H1 (cell line): ENCODE measurements at regions of chr9 and their contacts with region 1.

Region 1: GRCh38 chr9:95127249-95128176 is 190.0 kb downstream of the FANCC start:
- DNase-seq: peak in 1 of 2 experiments; percentile 93
- H3K4me3 ChIP-seq: peak overlapping the region; percentile 12 to 58 (median 40); a peak in 7 of 8 replicates
- H3K27ac ChIP-seq: no peak overlapping the region
- H3K4me1 ChIP-seq: peaks cover 5 to 28% (median 14%) of the 10 kb centered on the region in 4 experiments
- H3K27me3 ChIP-seq: no peaks in the 10 kb centered on the region
- CTCF ChIP-seq: peak; percentile 93 to 99 (median 97)
- EP300 ChIP-seq: no peak
- POLR2A ChIP-seq: no peak
- RAD21 ChIP-seq: peak; percentile 76 to 84

Region 2: GRCh38 chr9:94772639-94773303 is 354.7 kb before region 1 on chr9:
- CTCF ChIA-PET with region 1: interaction called, 10 read pairs
- POLR2A ChIA-PET with region 1: no interaction called
- DNase-seq: no peak
- H3K4me3 ChIP-seq: no peak overlapping the region
- H3K27ac ChIP-seq: no peak overlapping the region
- H3K4me1 ChIP-seq: peaks cover 0 to 3% (median 0%) of the 10 kb centered on the region in 4 experiments; a peak in 1 of 7 replicates
- H3K27me3 ChIP-seq: no peaks in the 10 kb centered on the region
- CTCF ChIP-seq: no peak
- EP300 ChIP-seq: no peak
- POLR2A ChIP-seq: no peak
- RAD21 ChIP-seq: no peak

Region 3: DNA sequence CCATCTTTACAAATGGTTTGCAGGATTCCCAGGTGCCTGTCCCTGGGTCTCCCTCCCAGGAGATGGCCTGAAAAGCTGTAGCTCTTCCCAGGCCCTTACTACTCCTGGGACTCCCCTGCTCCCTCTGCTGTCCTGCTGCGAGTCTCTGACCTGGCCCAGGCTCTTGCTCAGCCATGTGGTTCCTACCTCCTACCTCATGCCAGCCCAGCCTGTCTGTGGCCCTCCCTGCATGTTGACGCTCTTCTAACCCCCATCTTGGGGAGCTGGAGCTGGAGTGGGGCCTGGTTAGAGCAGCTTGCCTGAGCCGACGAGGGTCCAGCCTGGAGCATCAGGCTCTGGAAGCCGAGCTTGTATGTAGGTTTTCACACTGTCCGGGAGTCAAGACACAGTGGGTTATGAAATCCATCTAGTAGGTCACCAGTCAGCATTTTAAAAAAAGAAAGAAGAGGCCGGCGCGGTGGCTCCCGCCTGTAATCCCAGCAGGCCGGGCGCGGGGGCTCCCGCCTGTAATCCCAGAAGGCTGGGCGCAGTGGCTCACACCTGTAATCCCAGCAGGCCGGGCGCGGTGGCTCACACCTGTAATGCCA is 54.4 kb before region 1 on chr9:
- CTCF ChIA-PET with region 1: interaction called, 20 read pairs
- POLR2A ChIA-PET with region 1: no interaction called
- DNase-seq: peak in 1 of 2 experiments; percentile 57
- H3K4me3 ChIP-seq: no peak overlapping the region
- H3K27ac ChIP-seq: no peak overlapping the region
- H3K4me1 ChIP-seq: peaks cover 0 to 3% (median 1%) of the 10 kb centered on the region in 4 experiments; a peak in 3 of 7 replicates
- H3K27me3 ChIP-seq: no peaks in the 10 kb centered on the region
- CTCF ChIP-seq: peak; percentile 50 to 63 (median 59)
- EP300 ChIP-seq: no peak
- POLR2A ChIP-seq: no peak
- RAD21 ChIP-seq: peak; percentile 51 to 64

Region 4: DNA sequence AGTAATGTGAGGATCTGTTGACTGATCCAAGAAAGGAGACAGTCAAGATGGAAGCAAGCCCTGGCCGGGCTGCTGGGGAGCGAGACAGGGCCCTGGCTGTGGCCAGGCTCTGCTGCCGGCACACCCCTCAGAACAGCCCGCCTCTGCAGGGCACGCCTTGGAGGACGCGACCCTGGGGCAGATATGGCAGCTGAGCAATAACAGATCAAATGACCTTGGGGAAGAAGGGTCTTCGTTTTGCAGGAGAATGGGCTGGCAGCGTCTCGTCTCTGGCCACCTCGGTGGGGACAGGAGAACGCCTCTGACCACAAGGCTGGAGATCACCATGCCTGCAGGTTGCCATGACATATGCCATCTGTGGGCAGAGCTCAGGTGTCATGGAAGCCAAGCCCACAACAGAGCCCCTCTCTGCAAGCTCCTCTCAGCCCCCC is 16.5 kb before region 1 on chr9:
- CTCF ChIA-PET with region 1: interaction called, 141 read pairs
- POLR2A ChIA-PET with region 1: no interaction called
- DNase-seq: no peak
- H3K4me3 ChIP-seq: no peak overlapping the region
- H3K27ac ChIP-seq: no peak overlapping the region
- H3K4me1 ChIP-seq: no peaks in the 10 kb centered on the region
- H3K27me3 ChIP-seq: no peaks in the 10 kb centered on the region
- CTCF ChIP-seq: no peak
- EP300 ChIP-seq: no peak
- POLR2A ChIP-seq: no peak
- RAD21 ChIP-seq: no peak

Region 5: DNA sequence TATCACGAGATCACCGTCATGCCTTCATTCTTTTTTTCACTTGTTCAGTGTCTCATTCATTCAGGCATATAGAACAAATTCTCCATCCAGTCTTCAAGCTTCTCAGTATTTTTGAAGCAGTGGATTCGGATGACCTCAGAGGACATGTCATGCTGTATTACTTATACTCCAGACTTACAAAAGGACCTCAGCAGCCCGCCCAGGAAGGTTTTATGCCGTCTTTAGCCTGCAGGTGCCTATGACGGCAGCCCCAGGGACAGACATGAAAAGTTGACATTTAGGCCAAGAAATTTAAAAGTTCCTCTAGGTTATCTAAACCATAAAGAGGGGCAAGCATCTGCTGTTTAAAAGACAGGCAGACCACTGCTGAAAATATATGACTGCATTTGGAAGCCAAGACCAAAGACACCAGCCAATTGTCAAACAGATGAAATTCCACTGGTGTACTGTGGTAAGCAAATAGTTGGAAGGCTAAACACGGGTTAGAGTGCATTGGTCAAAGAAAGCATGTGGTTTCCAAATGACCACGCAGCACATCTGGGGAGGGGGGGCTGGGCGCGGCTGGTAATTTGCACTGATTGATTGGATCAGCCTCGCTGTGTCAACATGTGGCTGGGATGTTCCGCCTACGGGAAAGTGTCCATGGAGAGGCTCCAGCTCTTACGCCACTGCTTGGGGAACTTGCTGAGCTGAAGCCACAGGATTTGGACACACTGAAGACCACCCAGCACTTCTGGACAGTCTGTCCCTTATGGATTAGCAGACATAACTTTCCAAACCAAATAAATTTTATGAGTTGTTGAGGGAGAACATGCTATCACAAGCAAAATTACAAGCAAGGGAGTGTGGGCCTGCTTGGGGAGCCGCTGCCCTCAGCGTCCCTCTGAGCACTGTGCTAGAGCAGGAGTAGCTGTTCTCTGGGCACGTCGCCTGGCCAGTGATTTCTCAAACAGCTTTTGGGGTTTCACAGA is 16.4 kb after region 1 on chr9:
- CTCF ChIA-PET with region 1: interaction called, 26 read pairs
- POLR2A ChIA-PET with region 1: interaction called, 4 read pairs
- DNase-seq: no peak
- H3K4me3 ChIP-seq: no peak overlapping the region
- H3K27ac ChIP-seq: no peak overlapping the region
- H3K4me1 ChIP-seq: no peaks in the 10 kb centered on the region
- H3K27me3 ChIP-seq: no peaks in the 10 kb centered on the region
- CTCF ChIP-seq: no peak
- EP300 ChIP-seq: no peak
- POLR2A ChIP-seq: no peak
- RAD21 ChIP-seq: no peak

Region 6: GRCh38 chr9:95249986-95250385 is 122.5 kb after region 1 on chr9:
- CTCF ChIA-PET with region 1: no interaction called
- POLR2A ChIA-PET with region 1: no interaction called
- DNase-seq: no peak
- H3K4me3 ChIP-seq: no peak overlapping the region
- H3K27ac ChIP-seq: no peak overlapping the region
- H3K4me1 ChIP-seq: peaks cover 0 to 4% (median 0%) of the 10 kb centered on the region in 4 experiments; a peak in 1 of 7 replicates
- H3K27me3 ChIP-seq: no peaks in the 10 kb centered on the region
- CTCF ChIP-seq: no peak
- EP300 ChIP-seq: no peak
- POLR2A ChIP-seq: no peak
- RAD21 ChIP-seq: no peak

Region 7: DNA sequence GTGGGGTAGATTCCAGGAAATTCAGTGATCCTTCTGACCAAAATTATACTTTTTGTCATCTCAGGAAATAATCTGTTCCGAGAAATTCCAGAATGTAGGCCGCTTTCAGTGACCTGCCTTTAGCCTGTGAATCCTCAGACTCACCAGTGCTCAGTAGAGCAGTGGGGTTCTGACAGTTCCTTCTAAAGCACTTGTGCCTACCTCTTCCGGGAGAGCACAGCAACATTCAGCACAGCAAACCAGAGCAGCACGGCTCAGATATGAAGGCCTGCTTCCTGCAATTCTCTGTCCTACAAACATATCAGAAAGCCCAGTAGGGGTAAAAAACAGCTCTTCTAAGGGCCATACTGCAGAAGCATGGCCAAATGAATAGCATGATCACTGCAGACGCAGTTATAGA is 175.0 kb after region 1 on chr9:
- CTCF ChIA-PET with region 1: no interaction called
- POLR2A ChIA-PET with region 1: no interaction called
- DNase-seq: no peak
- H3K4me3 ChIP-seq: no peak overlapping the region
- H3K27ac ChIP-seq: no peak overlapping the region
- H3K4me1 ChIP-seq: peaks cover 0 to 3% (median 3%) of the 10 kb centered on the region in 4 experiments; a peak in 3 of 7 replicates
- H3K27me3 ChIP-seq: no peaks in the 10 kb centered on the region
- CTCF ChIP-seq: no peak
- EP300 ChIP-seq: no peak
- POLR2A ChIP-seq: no peak
- RAD21 ChIP-seq: no peak